Left lung (tissue), 14 donors: ENCODE measurements at regions of chr3 and their contacts with region 1.

Region 1: GRCh38 chr3:69389520-69390248 is 3.8 kb upstream of the FRMD4B start:
- DNase-seq: no peak
- ATAC-seq: no peak
- H3K4me3 ChIP-seq: no peak overlapping the region
- H3K27ac ChIP-seq: no peak overlapping the region
- H3K4me1 ChIP-seq: peaks cover 5 to 41% of the 10 kb centered on the region in 2 donors
- H3K27me3 ChIP-seq: peaks cover 0 to 14% of the 10 kb centered on the region in 2 donors
- CTCF ChIP-seq: no peak

Region 2: DNA sequence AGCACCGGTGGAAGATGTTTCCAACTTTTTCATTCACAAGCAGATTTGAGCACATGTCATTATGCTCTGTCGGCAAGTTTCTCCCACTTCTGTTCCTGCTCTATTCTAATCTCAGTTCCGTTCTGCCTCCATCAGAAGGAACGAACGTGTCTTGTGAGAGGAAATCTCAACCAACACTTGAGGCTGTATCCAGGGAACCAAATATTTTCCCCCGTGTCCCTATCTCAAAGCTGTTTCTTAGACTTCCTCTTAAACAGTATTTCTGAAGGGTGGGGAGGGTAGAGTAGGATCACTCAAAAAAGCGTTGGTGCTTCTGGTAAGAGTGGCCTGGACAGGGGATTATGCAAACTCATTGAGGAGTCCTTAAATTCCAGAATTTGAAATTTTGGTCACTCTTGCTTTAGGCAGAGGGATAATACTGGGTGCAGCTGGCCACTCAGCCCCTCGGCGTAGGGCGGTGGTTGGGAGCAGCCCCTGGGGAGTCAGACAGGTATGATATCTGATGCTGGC is 58.7 kb before region 1 on chr3:
- intact Hi-C with region 1: loop called in 1 of 2 experiments (anchors 10 kb)
- DNase-seq: peak; percentile 45 to 83 (median 74)
- ATAC-seq: peak; percentile 83
- H3K4me3 ChIP-seq: no peak overlapping the region
- H3K27ac ChIP-seq: peak overlapping the region; percentile 73 to 85
- H3K4me1 ChIP-seq: peaks cover 47 to 56% of the 10 kb centered on the region in 2 donors
- H3K27me3 ChIP-seq: no peaks in the 10 kb centered on the region
- CTCF ChIP-seq: no peak